Activated CD8-positive, alpha-beta T cell treated with anti-CD3 and anti-CD28 coated beads, Interleukin-2, amount 10 ng/mL, durations not matched to agents 7 days and 5 days (primary cell): ENCODE measurements at regions of chr11 and their contacts with region 1.

Region 1: DNA sequence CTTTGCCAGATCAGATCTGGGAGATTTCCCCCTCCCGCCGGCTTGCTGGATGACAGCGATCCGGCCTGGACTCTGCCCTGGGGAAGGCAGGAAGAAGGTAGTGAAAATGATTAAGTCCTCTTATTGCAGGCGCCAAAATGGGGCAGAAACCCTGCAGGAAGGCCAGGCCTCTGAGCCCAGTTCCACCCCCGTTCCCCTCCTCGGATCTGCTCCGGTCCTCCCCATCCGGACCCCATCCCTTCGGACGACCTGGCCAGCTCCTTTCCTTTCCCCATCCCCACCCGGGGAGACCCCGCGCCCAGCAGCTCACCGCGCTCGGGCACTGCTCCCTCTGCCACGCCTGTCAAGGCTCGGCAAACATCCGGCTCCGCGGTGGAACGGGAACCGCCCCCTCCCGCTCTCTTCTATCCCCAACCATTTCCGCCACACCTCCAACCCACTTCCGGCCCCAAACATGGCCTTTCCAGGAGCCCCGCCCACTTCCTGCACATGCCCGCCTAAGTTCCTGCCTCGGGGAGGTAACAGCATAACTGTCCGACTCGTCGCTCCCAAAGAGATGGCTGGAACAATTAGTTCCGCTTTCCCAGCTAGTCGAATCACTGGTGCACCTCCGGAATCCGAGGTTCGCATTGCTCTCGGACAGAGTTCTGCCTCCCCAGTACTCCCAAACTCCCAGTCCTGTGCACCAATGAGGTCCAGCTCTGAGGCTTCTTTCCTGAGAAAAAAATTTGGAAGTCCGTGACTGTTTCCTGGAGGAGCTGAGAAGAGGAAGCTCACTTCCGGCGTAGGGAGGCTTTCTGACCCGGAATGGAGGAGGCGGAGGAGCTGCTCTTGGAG is at the starts of genes ARHGAP1 and ZNF408:
- DNase-seq: peak; percentile 100
- ATAC-seq: peak; percentile 92
- H3K4me3 Mint-ChIP-seq: peak within 1 kb of the TSS; percentile 98
- H3K27ac Mint-ChIP-seq: peak within 1 kb of the TSS; percentile 97
- H3K4me1 Mint-ChIP-seq: peaks cover 55% of the 10 kb centered on the region
- H3K27me3 Mint-ChIP-seq: no peaks in the 10 kb centered on the region
- total RNA-seq, gene ARHGAP1: 69.1 to 71.3 TPM
- total RNA-seq, gene ZNF408: 15.8 to 16.1 TPM

Region 2: DNA sequence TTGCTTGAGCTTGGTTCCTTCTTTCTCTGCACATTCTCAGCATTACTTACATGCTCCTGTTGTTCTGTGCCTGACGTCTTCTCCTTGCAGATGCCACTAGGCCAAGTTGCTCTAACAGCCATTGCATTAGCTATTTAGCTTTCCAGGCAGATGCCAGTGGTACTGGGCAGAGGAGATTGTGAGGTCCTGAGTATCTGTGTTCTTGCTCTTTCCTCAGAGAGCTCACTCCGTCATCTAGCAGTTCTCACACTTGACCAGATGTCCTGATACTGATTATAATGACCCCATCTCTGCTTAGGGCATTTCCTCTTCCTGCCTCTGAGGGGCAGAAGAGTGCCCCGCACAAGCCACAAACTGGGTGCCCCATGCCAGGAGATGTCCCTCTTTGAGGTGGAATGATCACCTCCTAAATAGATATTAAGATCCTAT is 30.7 kb before region 1 on chr11:
- CTCF ChIA-PET with region 1: interaction called, 22 read pairs
- POLR2A ChIA-PET with region 1: interaction called, 17 read pairs
- DNase-seq: no peak
- ATAC-seq: no peak
- H3K4me3 Mint-ChIP-seq: no peak overlapping the region
- H3K27ac Mint-ChIP-seq: peak overlapping the region; percentile 77
- H3K4me1 Mint-ChIP-seq: peaks cover 50% of the 10 kb centered on the region
- H3K27me3 Mint-ChIP-seq: no peaks in the 10 kb centered on the region

Region 3: GRCh38 chr11:46675288-46675851 is 25.1 kb before region 1 on chr11:
- CTCF ChIA-PET with region 1: interaction called, 22 read pairs
- POLR2A ChIA-PET with region 1: interaction called, 17 read pairs
- DNase-seq: no peak
- ATAC-seq: no peak
- H3K4me3 Mint-ChIP-seq: no peak overlapping the region
- H3K27ac Mint-ChIP-seq: peak overlapping the region; percentile 92
- H3K4me1 Mint-ChIP-seq: peaks cover 62% of the 10 kb centered on the region
- H3K27me3 Mint-ChIP-seq: no peaks in the 10 kb centered on the region